Ascending aorta (tissue), 2 donors: ENCODE measurements at regions of chr16 and their contacts with region 1.

Region 1: DNA sequence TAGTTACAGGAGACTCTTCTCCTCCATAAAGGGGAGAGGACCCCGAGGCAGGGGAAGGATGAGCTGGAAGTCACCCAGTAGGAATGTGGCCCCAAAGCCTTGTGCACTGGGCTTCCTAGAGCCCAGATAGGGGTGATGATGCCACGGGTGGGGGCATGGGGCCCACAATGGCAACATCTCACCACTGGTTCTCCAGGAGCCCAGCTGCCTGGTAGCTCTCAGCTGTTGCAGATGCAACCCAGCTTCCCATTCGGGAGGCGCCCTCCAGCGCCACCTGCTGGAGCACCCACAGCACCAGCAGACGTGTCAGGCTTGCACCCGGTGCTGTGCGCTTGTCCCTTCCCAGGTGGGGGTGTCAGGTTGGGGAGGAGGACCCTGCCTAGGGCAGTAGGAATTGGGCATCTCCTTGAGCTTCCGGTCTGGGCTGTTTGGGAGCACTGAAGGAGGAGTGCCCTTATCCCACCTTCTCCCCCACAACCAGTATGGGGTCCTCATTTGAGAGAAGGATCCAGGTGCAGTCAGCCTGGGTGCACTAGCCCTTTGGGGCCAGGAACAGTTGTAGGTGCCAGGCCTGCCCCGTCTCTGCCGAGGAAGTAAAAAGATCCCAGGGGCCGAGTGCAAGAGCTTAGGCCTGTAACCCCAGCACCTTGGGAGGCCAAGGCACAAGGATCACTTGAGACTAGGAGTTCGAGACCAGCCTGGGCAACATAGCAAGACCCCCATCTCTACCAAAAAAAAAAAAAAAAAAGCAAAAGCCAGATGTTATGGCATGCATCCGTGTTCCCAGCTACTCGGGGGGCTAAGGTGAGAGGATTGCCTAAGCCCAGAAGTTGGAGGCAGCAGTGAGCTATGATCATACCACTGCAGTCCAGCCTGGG is 14.4 kb downstream of the CDIPT start:
- DNase-seq: peak in 1 of 2 donors; percentile 84
- H3K4me3 ChIP-seq: no peak overlapping the region
- H3K27ac ChIP-seq: no peak overlapping the region
- H3K4me1 ChIP-seq: no peaks in the 10 kb centered on the region
- H3K27me3 ChIP-seq: no peaks in the 10 kb centered on the region
- CTCF ChIP-seq: peak; percentile 75 to 92 (median 82)

Region 2: DNA sequence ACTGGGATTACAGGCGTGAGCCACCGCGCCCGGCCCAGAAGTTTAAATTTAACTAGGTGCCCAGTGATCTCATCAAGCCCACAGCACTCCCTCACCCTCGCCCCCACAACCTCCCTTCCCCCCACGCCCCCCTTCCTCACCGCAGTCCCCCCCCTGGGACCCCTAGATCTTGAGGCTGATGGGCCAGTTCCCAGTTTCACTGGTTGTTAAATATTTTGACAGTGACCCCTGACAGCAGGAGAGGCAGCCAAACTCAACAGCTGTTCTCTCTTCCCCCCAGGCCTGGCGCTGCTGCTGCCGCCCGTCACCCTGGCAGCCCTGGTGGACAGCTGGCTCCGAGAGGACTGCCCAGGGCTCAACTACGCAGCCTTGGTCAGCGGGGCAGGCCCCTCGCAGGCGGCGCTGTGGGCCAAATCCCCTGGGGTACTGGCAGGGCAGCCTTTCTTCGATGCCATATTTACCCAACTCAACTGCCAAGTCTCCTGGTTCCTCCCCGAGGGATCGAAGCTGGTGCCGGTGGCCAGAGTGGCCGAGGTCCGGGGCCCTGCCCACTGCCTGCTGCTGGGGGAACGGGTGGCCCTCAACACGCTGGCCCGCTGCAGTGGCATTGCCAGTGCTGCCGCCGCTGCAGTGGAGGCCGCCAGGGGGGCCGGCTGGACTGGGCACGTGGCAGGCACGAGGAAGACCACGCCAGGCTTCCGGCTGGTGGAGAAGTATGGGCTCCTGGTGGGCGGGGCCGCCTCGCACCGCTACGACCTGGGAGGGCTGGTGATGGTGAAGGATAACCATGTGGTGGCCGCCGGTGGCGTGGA is 154.1 kb before region 1 on chr16:
- intact Hi-C with region 1: loop called (anchors 5 kb)
- DNase-seq: peak; percentile 29 to 77
- H3K4me3 ChIP-seq: peak overlapping the region in 1 of 2 donors; percentile 33
- H3K27ac ChIP-seq: peak overlapping the region; percentile 72 to 82
- H3K4me1 ChIP-seq: no peaks in the 10 kb centered on the region
- H3K27me3 ChIP-seq: no peaks in the 10 kb centered on the region
- CTCF ChIP-seq: peak in 1 of 3 experiments; percentile 11

Region 3: GRCh38 chr16:29825145-29826044 is 23.3 kb before region 1 on chr16:
- intact Hi-C with region 1: loop called (anchors 2 kb)
- DNase-seq: no peak
- H3K4me3 ChIP-seq: peak overlapping the region; percentile 38 to 41
- H3K27ac ChIP-seq: peak overlapping the region; percentile 69 to 88
- H3K4me1 ChIP-seq: peaks cover 28 to 41% of the 10 kb centered on the region in 2 donors
- H3K27me3 ChIP-seq: no peaks in the 10 kb centered on the region
- CTCF ChIP-seq: no peak